ENCODE measurements at regions of chr1 and their contacts with region 1.

Region 1: DNA sequence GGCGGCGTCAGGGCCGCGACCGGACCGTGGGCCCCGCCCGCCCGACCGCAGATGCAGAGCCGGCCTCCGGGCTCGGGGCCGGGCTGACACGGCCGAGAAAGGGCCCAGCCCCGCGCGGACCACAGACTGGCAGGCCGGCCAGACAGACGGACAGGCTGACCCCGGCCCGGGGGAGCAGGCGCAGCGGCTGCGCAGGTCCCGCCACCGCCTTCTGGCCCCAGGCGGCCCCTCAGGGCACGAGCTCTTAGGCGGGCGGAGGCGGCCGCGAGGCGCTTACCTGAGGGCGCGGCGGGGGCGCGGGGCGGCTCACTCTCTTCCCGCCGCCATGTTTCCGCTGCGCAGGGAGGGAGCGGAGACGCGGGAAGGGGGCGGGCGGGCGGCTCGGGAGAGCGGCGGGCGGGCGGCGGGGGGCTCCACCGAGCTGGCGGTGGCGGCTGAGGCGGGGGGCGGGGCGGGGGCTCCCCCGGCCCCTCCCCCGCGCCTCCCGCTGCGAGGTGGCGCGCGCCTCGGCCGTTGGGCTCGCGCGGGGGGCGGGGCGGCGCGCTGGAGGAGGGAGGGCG is at the start of gene SCMH1:
- ATAC-seq: peak; percentile 65 to 85 (median 72)
- H3K4me3 ChIP-seq: peak within 1 kb of the TSS; percentile 52 to 92 (median 83)
- H3K27ac ChIP-seq: peak within 1 kb of the TSS; percentile 52 to 85
- H3K4me1 ChIP-seq: peaks cover 32 to 33% of the 10 kb centered on the region in 2 donors
- total RNA-seq, gene SCMH1: 8.8 to 40.9 (median 30.1) TPM

Region 2: GRCh38 chr1:41045740-41046139 is 196.1 kb before region 1 on chr1:
- in situ Hi-C with region 1: loop called in 1 of 9 experiments (anchors 25 kb)
- ATAC-seq: peak in 2 of 8 experiments; percentile 57 to 66
- H3K4me3 ChIP-seq: no peak overlapping the region
- H3K27ac ChIP-seq: no peak overlapping the region
- H3K4me1 ChIP-seq: no peaks in the 10 kb centered on the region

Region 3: DNA sequence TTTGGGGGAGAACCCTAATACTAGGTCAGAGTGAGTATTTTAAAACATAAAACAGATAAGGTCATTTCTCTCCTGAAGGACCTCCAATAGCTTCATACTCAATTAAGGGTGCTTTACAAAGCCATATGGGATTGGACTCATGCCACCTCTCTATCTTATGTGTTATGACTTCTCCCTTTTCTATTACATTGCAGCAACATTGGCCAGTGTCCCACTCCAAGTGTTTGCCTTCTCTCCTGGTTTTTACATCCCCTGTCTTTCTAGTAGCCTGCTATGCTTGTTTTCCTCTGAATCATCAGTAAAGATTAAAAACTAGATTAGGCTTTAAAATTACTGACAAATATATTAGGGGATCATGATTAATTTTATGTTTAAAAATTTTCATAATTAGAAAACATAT is 66.3 kb before region 1 on chr1:
- in situ Hi-C with region 1: no loop called
- ATAC-seq: no peak
- H3K4me3 ChIP-seq: no peak overlapping the region
- H3K27ac ChIP-seq: no peak overlapping the region
- H3K4me1 ChIP-seq: no peaks in the 10 kb centered on the region